PC-3 (cell line): ENCODE measurements at regions of chr12 and their contacts with region 1.

Region 1: DNA sequence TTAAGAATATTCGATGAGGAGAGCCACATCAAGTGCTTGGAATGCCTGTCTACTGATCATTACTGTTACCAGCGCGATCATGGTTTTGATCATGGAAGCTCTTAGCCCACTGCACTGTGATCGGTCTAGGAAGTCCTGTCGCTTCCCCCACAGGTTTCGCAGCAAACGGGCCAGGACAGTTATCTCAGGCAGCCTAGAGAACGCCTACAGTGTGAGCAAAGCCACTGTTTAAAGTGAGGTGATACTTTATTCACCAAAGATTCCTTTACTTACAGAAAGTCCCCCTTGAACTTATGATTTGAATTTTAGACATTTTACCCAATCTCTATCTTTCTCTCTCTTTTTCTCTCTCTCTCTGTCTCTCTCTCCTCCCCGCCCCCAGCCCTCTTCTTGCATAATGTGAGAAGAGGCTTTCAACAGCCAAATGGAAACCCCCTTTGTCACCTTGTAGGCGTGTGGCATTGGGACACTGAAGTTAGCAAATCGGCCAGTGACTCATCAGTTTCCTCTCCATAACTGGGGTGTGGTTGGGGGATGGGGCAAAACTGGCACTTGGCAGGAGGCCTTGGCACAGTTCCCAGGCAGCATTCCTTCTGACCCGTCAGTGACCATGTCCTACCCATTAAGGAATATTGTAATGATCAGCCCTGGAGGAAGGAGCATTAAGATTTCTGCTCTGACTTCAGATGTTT is 214.8 kb downstream of the CHST11 start:
- DNase-seq: peak; percentile 100
- ATAC-seq: peak; percentile 80
- H3K4me3 ChIP-seq: peak overlapping the region; percentile 49; the same call in 1 of the 2 replicates
- H3K27ac ChIP-seq: peak overlapping the region; percentile 77
- H3K4me1 ChIP-seq: peaks cover 48% of the 10 kb centered on the region
- H3K27me3 ChIP-seq: no peaks in the 10 kb centered on the region
- CTCF ChIP-seq: no peak

Region 2: DNA sequence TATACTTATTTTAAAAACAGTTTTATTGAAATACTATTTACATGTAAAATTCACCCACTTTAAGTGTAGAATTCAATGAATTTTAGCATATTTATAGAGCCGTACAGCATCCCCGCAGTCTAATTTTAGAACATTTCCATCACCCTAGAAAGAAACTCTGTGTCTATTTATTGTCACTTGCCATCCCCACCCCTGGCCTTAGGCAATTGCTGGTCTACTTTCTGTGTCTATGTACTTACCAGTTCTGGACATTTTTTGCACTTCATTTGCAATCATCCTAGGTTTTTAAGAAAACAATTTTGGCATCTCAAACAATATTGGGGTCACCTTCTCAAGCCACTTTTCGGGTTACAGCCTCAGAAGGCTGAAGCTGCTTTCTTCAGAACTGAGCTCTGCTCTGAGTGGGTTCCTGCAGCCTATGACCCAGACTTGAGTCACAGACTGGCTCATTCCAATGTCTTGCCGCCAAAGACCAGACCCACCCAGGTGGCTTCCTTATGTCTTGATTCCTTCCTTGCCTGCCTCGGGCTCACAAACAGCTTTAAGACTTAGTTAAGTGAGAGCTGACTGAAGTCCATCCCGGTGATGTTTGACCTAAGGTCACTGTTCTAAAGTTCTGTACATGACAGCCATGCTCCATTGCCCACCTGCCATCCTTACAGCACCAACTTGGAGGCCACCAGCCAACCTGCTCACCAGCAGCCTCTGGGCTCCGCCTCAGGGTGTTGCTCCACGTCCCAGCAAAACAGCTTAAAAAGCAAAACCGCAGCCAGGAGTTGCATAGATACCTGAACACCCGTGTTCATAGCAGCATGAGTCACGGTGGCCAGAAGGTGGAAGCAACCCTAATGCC is 83.3 kb before region 1 on chr12:
- CTCF ChIA-PET with region 1: no interaction called
- POLR2A ChIA-PET with region 1: interaction called, 3 read pairs
- intact Hi-C with region 1: loop called (anchors 1 kb)
- DNase-seq: peak; percentile 98
- ATAC-seq: peak; percentile 92
- H3K4me3 ChIP-seq: peak overlapping the region; percentile 59
- H3K27ac ChIP-seq: peak overlapping the region; percentile 85
- H3K4me1 ChIP-seq: peaks cover 51% of the 10 kb centered on the region
- H3K27me3 ChIP-seq: no peaks in the 10 kb centered on the region
- CTCF ChIP-seq: no peak

Region 3: DNA sequence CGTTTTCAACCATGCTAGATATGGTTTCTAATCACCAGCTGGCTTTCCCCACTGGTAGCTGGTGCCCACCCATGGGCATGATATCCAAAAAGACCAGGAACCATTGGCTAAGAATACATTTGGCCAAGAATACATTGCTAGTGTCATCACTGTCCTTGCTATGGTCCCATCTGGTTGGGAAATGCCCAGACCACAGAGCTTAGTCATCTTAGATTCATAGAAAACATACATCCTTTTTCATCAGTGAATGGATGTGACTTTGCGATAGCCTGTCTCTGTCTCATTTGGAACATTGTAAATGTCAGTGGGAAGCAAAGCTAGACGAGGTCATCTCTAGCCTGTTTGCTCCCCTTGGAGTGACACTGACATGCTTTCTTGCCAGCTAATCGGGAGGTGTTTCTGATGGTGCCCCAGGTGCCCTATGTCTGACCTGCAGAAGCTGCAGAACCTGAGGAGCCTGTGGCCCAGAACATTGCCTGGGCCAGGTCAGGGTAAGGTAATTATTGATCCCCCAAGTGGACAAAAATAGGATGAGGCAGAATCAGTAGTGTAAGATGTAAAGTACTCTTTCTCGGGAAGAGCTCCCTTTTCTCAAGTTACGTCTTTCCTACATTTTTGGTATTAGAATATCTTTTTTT is 91.7 kb after region 1 on chr12:
- CTCF ChIA-PET with region 1: no interaction called
- POLR2A ChIA-PET with region 1: no interaction called
- intact Hi-C with region 1: loop called (anchors 10 kb)
- DNase-seq: peak; percentile 88
- ATAC-seq: peak; percentile 89
- H3K4me3 ChIP-seq: no peak overlapping the region
- H3K27ac ChIP-seq: peak overlapping the region; percentile 14; the same call in 1 of the 2 replicates
- H3K4me1 ChIP-seq: peaks cover 20% of the 10 kb centered on the region
- H3K27me3 ChIP-seq: no peaks in the 10 kb centered on the region
- CTCF ChIP-seq: no peak